GM13977 (cell line): ENCODE measurements at regions of chr4 and their contacts with region 1.

Region 1: GRCh38 chr4:41214136-41214824 is at the start of gene APBB2:
- DNase-seq: peak; percentile 90
- CTCF ChIP-seq: peak; percentile 86

Region 2: DNA sequence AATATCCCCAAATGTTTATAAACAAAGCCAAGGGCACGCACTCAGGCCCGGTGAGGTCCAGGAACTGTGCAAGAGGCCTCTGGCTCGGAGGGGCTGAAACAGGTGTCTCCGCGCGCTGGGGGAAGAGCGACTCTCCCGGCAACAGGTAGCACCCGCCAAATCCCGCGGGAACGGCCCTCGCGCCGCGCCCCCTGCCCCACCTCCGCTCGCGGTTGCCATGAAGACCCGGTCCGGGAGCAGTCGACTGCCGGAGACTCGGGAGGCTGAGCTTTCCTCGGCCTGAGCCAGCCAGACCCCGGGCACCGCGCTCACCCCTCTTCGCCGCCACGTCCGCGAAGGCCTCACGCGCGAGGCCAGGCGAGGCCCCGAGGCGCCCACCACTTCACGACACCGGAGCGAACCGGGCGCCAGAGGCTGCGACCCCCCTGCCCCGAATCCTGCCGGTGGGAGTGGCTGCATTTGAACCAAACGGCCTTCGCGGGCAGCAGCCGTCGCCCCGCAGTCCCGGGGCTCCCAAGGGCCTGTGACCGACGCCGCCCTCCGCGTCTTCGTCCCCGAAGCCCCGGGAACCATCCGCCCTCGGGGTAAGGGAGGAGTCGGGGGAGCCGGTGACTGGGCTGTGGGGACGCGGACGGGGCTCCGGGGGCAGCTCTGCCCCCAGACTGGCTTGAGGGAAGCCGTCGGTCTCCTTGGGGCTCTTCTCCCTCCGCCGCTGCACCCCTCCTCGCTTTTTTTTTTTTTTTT is 464.4 kb before region 1 on chr4 and contains the start of gene NSUN7:
- in situ Hi-C with region 1: loop called (anchors 25 kb)
- DNase-seq: peak; percentile 37
- CTCF ChIP-seq: no peak

Region 3: GRCh38 chr4:40976343-40976742 is 237.9 kb before region 1 on chr4:
- in situ Hi-C with region 1: loop called (anchors 10 kb)
- DNase-seq: peak; percentile 44
- CTCF ChIP-seq: peak; percentile 67

Region 4: GRCh38 chr4:41465146-41465761 is 251.0 kb after region 1 on chr4:
- in situ Hi-C with region 1: no loop called
- DNase-seq: no peak
- CTCF ChIP-seq: no peak

Region 5: GRCh38 chr4:41475402-41475801 is 261.1 kb after region 1 on chr4:
- in situ Hi-C with region 1: no loop called
- DNase-seq: no peak
- CTCF ChIP-seq: no peak